PC-9 (cell line): ENCODE measurements at regions of chr6 and their contacts with region 1.

Region 1: GRCh38 chr6:32971581-32972352 is 3.4 kb downstream of the BRD2 start:
- DNase-seq: peak; percentile 99
- H3K4me3 ChIP-seq: peak overlapping the region; percentile 100
- H3K27ac ChIP-seq: peak overlapping the region; percentile 99
- H3K4me1 ChIP-seq: peaks cover 25% of the 10 kb centered on the region
- H3K27me3 ChIP-seq: no peaks in the 10 kb centered on the region
- CTCF ChIP-seq: no peak

Region 2: DNA sequence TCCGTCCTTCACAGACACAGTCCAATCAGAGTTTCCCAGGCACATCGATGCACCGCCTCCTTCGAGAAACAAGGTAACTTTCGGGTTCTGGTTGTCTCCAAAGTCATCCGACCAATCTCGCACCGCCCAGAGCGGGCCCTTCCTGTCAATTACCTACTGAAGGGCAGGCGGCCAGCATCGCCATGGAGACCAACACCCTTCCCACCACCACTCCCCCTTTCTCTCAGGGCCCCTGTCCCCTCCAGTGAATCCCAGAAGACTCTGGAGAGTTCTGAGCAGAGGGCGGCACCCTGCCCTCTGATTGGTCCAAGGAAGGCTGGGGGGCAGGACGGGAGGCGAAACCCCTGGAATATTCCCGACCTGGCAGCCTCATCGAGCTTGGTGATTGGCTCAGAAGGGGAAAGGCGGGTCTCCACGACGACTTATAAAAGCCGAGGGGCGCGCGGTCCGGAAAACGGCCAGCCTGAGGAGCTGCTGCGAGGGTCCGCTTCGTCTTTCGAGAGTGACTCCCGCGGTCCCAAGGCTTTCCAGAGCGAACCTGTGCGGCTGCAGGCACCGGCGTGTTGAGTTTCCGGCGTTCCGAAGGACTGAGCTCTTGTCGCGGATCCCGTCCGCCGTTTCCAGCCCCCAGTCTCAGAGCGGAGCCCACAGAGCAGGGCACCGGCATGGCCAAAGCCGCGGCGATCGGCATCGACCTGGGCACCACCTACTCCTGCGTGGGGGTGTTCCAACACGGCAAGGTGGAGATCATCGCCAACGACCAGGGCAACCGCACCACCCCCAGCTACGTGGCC is 1144.3 kb before region 1 on chr6 and contains the start of gene HSPA1B:
- CTCF ChIA-PET with region 1: no interaction called
- POLR2A ChIA-PET with region 1: no interaction called
- intact Hi-C with region 1: loop called (anchors 10 kb)
- DNase-seq: peak; percentile 99
- H3K4me3 ChIP-seq: peak within 1 kb of the TSS; percentile 84
- H3K27ac ChIP-seq: peak within 1 kb of the TSS; percentile 98
- H3K4me1 ChIP-seq: peaks cover 54% of the 10 kb centered on the region
- H3K27me3 ChIP-seq: no peaks in the 10 kb centered on the region
- CTCF ChIP-seq: no peak
- total RNA-seq, gene HSPA1B: 334 and 340 TPM in 2 replicates

Region 3: GRCh38 chr6:32843979-32844838 is 127.6 kb before region 1 on chr6 and contains the start of gene PSMB8:
- CTCF ChIA-PET with region 1: interaction called, 3 read pairs
- POLR2A ChIA-PET with region 1: interaction called, 3 read pairs
- intact Hi-C with region 1: loop called (anchors 2 kb)
- DNase-seq: peak; percentile 94
- H3K4me3 ChIP-seq: peak within 1 kb of the TSS; percentile 91
- H3K27ac ChIP-seq: no peak within 1 kb of the TSS
- H3K4me1 ChIP-seq: peaks cover 6% of the 10 kb centered on the region; the same call in 1 of the 2 replicates
- H3K27me3 ChIP-seq: no peaks in the 10 kb centered on the region
- CTCF ChIP-seq: no peak
- total RNA-seq, gene PSMB8: 70.8 and 101 TPM in 2 replicates

Region 4: DNA sequence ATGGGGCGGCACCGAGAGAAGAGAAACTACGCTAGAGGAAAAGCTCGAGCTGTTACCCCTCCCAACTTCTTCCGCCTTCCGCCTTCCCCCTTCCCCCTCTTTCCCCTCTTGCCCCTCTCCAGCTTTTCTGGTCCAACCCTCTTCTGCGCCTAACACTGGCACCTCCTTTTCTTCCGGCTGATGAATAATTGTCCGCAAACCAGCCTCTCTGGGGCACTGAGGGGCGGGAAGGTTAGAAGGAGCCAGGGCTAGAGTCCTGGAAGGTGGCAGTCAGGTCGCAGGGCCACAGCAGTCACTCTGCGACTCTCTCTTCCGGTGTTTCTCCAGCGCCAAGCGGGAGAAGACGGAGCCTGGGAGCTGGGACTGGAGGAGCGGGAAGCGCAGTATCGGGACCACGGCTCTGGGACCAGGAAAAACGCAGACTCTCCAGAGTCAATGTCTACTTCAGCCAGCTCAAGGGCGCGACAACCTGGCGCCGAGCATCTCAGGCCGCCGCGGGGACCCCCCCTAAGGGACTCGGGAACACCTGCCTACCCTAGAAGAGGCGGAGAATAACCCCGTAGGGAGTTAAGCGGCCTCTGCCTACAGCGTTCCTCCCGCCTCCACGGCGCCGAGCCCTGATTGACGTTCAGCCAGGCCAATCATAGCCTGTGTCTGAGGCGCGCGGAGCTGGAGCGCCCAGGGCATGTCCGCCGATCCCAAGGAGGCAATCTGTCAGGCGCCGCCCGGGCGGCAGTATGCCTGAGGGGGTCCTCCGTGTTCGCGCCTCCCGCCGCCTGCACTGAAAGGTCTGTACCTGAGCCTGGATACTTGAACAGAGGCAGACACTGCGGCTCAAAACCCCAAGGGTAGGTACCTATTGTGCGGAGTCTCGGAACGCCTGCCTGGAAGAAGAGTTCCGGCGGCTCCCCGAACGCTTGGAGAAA is 77.4 kb before region 1 on chr6:
- CTCF ChIA-PET with region 1: interaction called, 5 read pairs
- POLR2A ChIA-PET with region 1: interaction called, 27 read pairs
- intact Hi-C with region 1: loop called (anchors 2 kb)
- DNase-seq: peak; percentile 83 to 97
- H3K4me3 ChIP-seq: peak overlapping the region; percentile 86
- H3K27ac ChIP-seq: peak overlapping the region; percentile 63
- H3K4me1 ChIP-seq: peaks cover 12% of the 10 kb centered on the region
- H3K27me3 ChIP-seq: no peaks in the 10 kb centered on the region
- CTCF ChIP-seq: no peak

Region 5: GRCh38 chr6:32984605-32985389 is 13.0 kb after region 1 on chr6:
- CTCF ChIA-PET with region 1: interaction called, 16 read pairs
- POLR2A ChIA-PET with region 1: interaction called, 20 read pairs
- intact Hi-C with region 1: no loop called
- DNase-seq: peak; percentile 85
- H3K4me3 ChIP-seq: no peak overlapping the region
- H3K27ac ChIP-seq: no peak overlapping the region
- H3K4me1 ChIP-seq: 0 out of 2 replicates have a peak, but pooled peaks cover 4% of the 10 kb centered on the region
- H3K27me3 ChIP-seq: 0 out of 2 replicates have a peak, but pooled peaks cover 18% of the 10 kb centered on the region
- CTCF ChIP-seq: peak; percentile 89

Region 6: DNA sequence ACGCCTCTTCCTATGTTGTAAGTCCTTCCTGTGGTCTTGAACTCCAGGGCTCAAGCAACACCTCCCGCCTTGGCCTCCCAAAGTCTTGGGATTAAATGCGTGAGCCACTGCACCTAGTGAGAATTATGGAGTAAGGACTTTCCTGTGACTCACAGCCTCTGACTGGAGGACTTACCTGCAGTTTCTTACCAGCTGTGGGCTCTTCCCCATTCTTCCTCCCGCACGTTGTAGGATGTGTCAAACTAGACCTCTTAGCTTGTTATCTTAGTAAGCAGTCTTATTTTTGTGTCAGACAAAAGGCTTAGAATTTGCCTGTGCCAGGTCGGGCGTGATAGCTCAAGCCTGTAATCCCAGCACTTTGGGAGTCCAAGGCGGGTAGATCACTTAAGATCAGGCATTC is 577.4 kb after region 1 on chr6:
- CTCF ChIA-PET with region 1: no interaction called
- POLR2A ChIA-PET with region 1: interaction called, 21 read pairs
- intact Hi-C with region 1: no loop called
- DNase-seq: no peak
- H3K4me3 ChIP-seq: no peak overlapping the region
- H3K27ac ChIP-seq: no peak overlapping the region
- H3K4me1 ChIP-seq: no peaks in the 10 kb centered on the region; the same call in 1 of the 2 replicates
- H3K27me3 ChIP-seq: no peaks in the 10 kb centered on the region
- CTCF ChIP-seq: no peak